ENCODE measurements at regions of chr19 and their contacts with region 1.

Region 1: DNA sequence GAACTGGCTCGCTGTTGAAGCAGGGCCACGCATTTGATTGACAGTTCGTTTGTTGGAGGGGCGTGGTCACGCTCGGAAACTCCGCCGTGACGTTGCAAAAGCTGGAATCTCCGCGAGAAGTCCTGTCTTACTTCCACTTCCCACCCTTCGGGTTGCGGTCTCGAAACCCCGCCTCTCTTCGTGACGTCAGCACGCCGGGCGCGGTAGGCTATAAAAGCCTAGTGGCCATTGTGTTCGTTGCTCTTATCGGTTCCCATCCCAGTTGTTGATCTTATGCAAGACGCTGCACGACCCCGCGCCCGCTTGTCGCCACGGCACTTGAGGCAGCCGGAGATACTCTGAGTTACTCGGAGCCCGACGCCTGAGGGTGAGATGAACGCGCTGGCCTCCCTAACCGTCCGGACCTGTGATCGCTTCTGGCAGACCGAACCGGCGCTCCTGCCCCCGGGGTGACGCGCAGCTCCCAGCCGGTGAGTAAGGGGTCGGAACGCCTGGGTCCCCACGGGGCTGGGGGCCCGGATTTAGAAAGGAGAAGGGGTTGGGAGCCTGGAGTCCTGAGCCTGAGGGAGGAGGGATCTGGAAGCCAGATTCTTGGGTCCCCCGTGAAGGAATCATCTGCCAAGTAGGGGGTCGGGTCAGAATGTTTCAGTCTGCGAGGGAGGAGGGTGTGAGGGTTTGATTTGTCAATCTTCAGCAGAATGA is at the start of gene PPP1R15A:
- DNase-seq: peak; percentile 99
- H3K4me3 Mint-ChIP-seq: peak within 1 kb of the TSS; percentile 88
- H3K27ac Mint-ChIP-seq: peak within 1 kb of the TSS; percentile 91
- H3K4me1 Mint-ChIP-seq: peaks cover 44% of the 10 kb centered on the region
- H3K27me3 Mint-ChIP-seq: peaks cover 6% of the 10 kb centered on the region
- total RNA-seq, gene PPP1R15A: 77.2 to 81.4 TPM

Region 2: DNA sequence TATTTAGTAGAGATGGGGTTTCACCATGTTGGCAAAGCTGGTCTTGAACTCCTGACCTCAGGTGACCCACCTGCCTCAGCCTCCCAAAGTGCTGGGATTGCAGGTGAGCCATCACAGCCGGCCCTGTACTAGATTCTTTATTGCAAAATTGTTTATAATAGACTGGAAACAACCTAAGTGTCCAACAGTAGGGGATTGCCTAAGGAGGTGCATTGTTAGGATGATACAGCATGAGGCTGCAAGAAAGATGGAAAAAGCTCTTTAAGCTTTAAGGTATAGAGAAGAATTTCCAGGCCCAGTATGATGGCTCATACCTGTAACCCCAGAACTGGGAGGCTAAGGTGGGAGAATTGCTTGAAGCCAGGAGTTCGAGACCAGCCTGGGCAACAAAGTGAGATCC is 69.7 kb before region 1 on chr19:
- CTCF ChIA-PET with region 1: no interaction called
- POLR2A ChIA-PET with region 1: no interaction called
- DNase-seq: no peak
- H3K4me3 Mint-ChIP-seq: no peak overlapping the region
- H3K27ac Mint-ChIP-seq: no peak overlapping the region
- H3K4me1 Mint-ChIP-seq: peaks cover 3% of the 10 kb centered on the region
- H3K27me3 Mint-ChIP-seq: no peaks in the 10 kb centered on the region

Region 3: GRCh38 chr19:48858984-48859710 is 13.2 kb before region 1 on chr19:
- CTCF ChIA-PET with region 1: no interaction called
- POLR2A ChIA-PET with region 1: interaction called, 12 read pairs
- DNase-seq: peak; percentile 84
- H3K4me3 Mint-ChIP-seq: peak overlapping the region; percentile 94
- H3K27ac Mint-ChIP-seq: peak overlapping the region; percentile 78
- H3K4me1 Mint-ChIP-seq: peaks cover 11% of the 10 kb centered on the region
- H3K27me3 Mint-ChIP-seq: peaks cover 2% of the 10 kb centered on the region

Region 4: GRCh38 chr19:48922548-48923490 is 50.5 kb after region 1 on chr19:
- CTCF ChIA-PET with region 1: no interaction called
- POLR2A ChIA-PET with region 1: no interaction called
- DNase-seq: no peak
- H3K4me3 Mint-ChIP-seq: no peak overlapping the region
- H3K27ac Mint-ChIP-seq: no peak overlapping the region
- H3K4me1 Mint-ChIP-seq: peaks cover 7% of the 10 kb centered on the region
- H3K27me3 Mint-ChIP-seq: no peaks in the 10 kb centered on the region

Region 5: DNA sequence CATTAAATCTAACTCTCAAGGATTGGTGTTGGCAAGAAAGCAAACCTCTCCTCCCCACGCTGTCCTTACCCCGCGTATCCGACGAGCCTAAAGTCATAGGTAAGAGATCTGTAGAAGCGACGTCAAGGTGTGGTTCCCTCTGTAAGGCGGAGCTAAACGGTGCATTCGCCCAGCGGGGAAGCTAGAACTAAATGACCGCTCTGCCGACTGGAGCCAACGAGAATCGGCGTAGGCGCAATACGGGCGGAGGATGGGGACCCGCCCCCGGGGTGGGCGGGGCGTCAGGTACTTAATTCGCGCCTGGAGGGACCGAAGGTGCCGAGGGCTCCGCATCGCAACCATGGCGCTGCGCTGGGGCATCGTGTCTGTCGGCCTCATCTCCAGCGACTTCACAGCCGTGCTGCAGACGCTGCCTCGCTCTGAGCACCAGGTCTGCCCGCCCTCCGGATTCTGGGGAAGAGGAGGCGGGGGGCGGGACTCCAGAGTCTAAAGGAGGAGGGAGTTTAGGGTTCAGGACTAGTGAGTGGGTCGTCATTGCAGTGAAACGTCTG is 61.1 kb after region 1 on chr19 and contains the start of gene DHDH:
- CTCF ChIA-PET with region 1: interaction called, 3 read pairs
- POLR2A ChIA-PET with region 1: interaction called, 16 read pairs
- DNase-seq: peak; percentile 88
- H3K4me3 Mint-ChIP-seq: peak within 1 kb of the TSS; percentile 75
- H3K27ac Mint-ChIP-seq: peak within 1 kb of the TSS; percentile 36
- H3K4me1 Mint-ChIP-seq: peaks cover 20% of the 10 kb centered on the region
- H3K27me3 Mint-ChIP-seq: peaks cover 3% of the 10 kb centered on the region
- total RNA-seq, gene DHDH: 1.6 to 2.9 TPM

Region 6: GRCh38 chr19:48954595-48955310 is 82.4 kb after region 1 on chr19 and contains the start of gene BAX:
- CTCF ChIA-PET with region 1: interaction called, 3 read pairs
- POLR2A ChIA-PET with region 1: interaction called, 26 read pairs
- DNase-seq: peak; percentile 96
- H3K4me3 Mint-ChIP-seq: peak within 1 kb of the TSS; percentile 78
- H3K27ac Mint-ChIP-seq: peak within 1 kb of the TSS; percentile 90
- H3K4me1 Mint-ChIP-seq: peaks cover 44% of the 10 kb centered on the region
- H3K27me3 Mint-ChIP-seq: no peaks in the 10 kb centered on the region
- total RNA-seq, gene BAX: 255 to 258 TPM

Region 7: DNA sequence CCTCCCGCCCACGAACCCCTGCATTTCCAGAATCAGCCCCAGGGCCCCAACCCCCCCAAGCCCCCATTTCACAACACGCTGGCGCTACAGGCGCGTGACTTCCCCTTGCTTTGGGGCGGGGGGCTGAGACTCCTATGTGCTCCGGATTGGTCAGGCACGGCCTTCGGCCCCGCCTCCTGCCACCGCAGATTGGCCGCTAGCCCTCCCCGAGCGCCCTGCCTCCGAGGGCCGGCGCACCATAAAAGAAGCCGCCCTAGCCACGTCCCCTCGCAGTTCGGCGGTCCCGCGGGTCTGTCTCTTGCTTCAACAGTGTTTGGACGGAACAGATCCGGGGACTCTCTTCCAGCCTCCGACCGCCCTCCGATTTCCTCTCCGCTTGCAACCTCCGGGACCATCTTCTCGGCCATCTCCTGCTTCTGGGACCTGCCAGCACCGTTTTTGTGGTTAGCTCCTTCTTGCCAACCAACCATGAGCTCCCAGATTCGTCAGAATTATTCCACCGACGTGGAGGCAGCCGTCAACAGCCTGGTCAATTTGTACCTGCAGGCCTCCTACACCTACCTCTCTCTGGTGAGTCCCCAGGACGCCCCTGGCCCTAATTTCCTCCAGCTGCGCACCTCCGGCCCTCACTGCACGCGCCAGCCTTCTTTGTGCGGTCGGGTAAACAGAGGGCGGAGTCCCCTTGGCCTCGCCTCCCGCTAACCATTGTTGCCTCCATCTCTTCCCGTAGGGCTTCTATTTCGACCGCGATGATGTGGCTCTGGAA is 92.9 kb after region 1 on chr19 and contains the start of gene FTL:
- CTCF ChIA-PET with region 1: interaction called, 15 read pairs
- POLR2A ChIA-PET with region 1: interaction called, 53 read pairs
- DNase-seq: peak; percentile 92
- H3K4me3 Mint-ChIP-seq: peak within 1 kb of the TSS; percentile 92
- H3K27ac Mint-ChIP-seq: peak within 1 kb of the TSS; percentile 94
- H3K4me1 Mint-ChIP-seq: peaks cover 72% of the 10 kb centered on the region
- H3K27me3 Mint-ChIP-seq: no peaks in the 10 kb centered on the region
- total RNA-seq, gene FTL: 1,110 to 1,123 TPM

Region 8: GRCh38 chr19:48970923-48971395 is 98.6 kb after region 1 on chr19:
- CTCF ChIA-PET with region 1: interaction called, 15 read pairs
- POLR2A ChIA-PET with region 1: interaction called, 53 read pairs
- DNase-seq: peak; percentile 81
- H3K4me3 Mint-ChIP-seq: no peak overlapping the region
- H3K27ac Mint-ChIP-seq: no peak overlapping the region
- H3K4me1 Mint-ChIP-seq: peaks cover 27% of the 10 kb centered on the region
- H3K27me3 Mint-ChIP-seq: no peaks in the 10 kb centered on the region

Measured in activated CD4-positive, alpha-beta memory T cell treated with anti-CD3 and anti-CD28 coated beads, Interleukin-2, amount 10 ng/mL, durations not matched to agents 7 days and 5 days (primary cell).